Calu3 (cell line): ENCODE measurements at regions of chr5 and their contacts with region 1.

Region 1: DNA sequence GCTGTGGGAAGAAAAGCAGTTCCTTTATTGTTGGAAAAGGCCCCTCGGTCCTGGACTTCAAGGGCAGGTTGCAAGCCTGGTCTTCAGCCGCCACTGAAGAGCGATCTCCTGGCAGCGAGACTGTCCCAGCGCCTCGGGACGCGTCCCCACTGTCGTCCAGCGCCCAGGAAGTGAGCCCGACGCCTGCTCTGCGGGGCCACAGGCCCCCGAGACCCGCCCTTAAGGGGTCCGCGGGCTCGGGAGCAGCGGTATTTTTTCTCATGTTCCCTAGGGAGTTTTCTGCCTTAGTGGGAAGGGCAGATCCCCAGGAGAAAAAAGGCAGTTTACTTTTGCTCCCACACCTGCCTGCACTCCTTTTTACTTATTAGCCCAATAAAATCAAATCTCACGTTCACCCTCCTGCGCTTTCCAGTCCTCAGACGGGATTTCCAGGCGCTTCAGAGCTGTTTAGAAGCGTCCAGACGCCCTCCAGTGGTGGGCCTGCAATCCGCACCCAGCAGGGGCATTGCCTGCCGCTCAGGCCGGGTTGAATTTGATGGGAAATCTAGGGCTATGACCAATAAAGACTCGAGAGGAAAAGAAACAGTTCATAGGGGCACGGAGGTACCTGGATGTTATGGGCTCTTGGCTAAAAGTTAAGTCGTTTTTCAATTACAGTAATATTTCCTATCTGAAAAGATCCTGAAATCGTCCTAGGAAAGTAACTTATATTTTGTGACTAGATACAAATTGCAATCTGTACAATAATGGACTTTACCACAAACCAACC is 2.8 kb upstream of the EFNA5 start:
- DNase-seq: peak; percentile 97
- H3K4me3 Mint-ChIP-seq: peak overlapping the region; percentile 94
- H3K27ac Mint-ChIP-seq: peak overlapping the region; percentile 89
- H3K4me1 Mint-ChIP-seq: peaks cover 18% of the 10 kb centered on the region
- H3K27me3 Mint-ChIP-seq: no peaks in the 10 kb centered on the region
- CTCF ChIP-seq: peak; percentile 95

Region 2: GRCh38 chr5:106875591-106876297 is 797.8 kb before region 1 on chr5:
- CTCF ChIA-PET with region 1: interaction called, 5 read pairs
- intact Hi-C with region 1: loop called (anchors 10 kb)
- DNase-seq: peak; percentile 57
- H3K4me3 Mint-ChIP-seq: no peak overlapping the region
- H3K27ac Mint-ChIP-seq: no peak overlapping the region
- H3K4me1 Mint-ChIP-seq: peaks cover 27% of the 10 kb centered on the region
- H3K27me3 Mint-ChIP-seq: no peaks in the 10 kb centered on the region
- CTCF ChIP-seq: peak; percentile 50

Region 3: DNA sequence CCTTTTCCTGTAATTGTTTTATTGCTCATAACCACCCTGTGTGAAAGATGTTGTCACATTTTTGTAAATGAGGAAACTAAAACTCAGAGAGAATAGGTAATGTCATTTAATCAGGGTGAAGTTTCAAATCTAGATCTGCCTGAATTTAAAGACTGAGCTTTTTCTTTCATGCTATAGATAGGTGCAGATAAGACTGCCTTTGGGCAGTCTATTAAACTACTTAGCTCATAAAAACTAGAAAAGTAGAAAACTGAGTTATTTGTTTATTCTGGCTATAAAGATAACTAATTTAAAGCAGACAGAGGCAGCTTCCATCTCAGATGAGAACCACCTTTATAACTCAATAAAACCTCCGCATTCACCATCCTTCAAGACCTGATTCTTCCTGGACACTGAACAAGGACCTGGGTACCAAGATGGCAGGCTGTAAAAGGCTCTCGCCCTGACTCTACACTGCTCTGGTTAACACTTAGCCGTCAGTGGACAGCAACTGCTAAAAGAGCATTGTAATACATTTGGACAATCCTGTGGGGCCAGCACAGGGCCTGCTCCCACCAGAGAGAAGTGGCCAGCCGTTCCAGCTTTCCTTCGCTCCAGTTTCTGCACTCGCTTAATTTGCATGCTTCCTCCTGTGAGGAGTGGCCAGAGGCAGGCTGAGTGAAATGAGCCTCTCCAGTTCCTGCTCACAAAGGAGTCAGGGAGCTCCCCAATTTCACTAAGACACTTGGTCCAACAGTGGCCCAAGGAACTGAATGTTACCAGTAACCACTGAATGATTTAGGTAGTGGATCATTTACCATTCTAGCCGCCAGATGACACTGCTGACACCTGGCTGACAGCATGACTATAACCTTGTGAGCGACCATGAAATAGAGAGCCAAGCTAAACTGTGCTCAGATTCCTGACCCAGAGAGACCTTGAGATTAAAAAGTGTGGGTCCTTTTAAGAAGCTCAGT is 569.2 kb before region 1 on chr5:
- CTCF ChIA-PET with region 1: no interaction called
- intact Hi-C with region 1: loop called (anchors 2 kb)
- DNase-seq: peak; percentile 53
- H3K4me3 Mint-ChIP-seq: no peak overlapping the region
- H3K27ac Mint-ChIP-seq: peak overlapping the region; percentile 25
- H3K4me1 Mint-ChIP-seq: peaks cover 29% of the 10 kb centered on the region
- H3K27me3 Mint-ChIP-seq: no peaks in the 10 kb centered on the region
- CTCF ChIP-seq: peak; percentile 40

Region 4: DNA sequence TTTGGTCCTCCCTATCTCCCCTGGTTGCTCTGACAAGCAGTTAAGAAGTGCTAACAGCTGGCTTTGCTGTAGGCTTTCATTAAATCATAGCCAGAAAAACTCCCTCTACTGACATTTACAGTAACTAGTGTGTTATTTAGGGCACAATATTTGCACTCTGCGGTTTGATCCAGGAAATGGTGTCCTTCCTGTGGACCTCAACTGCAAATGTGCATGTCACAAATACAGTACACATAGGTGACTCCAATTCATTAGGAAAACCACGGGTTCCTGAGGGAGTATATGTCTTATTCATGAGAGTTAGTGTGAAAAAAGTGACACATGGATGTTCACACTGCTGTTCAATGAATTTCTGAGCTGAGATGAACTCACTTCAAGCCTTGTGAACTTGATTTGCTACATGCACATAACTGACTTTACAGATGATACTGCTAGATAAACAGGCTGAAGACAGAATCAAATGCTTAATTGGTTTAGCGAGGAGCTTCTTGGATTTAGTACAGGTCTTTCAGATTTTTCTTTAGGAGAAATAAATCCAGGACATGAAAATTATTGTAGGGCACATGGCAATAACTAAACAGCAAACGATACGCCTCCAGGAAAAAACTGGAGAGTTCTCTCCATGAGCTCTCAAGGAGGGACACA is 284.3 kb before region 1 on chr5:
- CTCF ChIA-PET with region 1: no interaction called
- intact Hi-C with region 1: loop called (anchors 2 kb)
- DNase-seq: peak; percentile 67
- H3K4me3 Mint-ChIP-seq: peak overlapping the region; percentile 61
- H3K27ac Mint-ChIP-seq: peak overlapping the region; percentile 97
- H3K4me1 Mint-ChIP-seq: peaks cover 64% of the 10 kb centered on the region
- H3K27me3 Mint-ChIP-seq: no peaks in the 10 kb centered on the region
- CTCF ChIP-seq: no peak

Region 5: GRCh38 chr5:107469485-107470294 is 203.9 kb before region 1 on chr5:
- CTCF ChIA-PET with region 1: interaction called, 5 read pairs
- intact Hi-C with region 1: loop called (anchors 2 kb)
- DNase-seq: peak; percentile 66
- H3K4me3 Mint-ChIP-seq: peak overlapping the region; percentile 45
- H3K27ac Mint-ChIP-seq: peak overlapping the region; percentile 96
- H3K4me1 Mint-ChIP-seq: peaks cover 95% of the 10 kb centered on the region
- H3K27me3 Mint-ChIP-seq: no peaks in the 10 kb centered on the region
- CTCF ChIP-seq: no peak

Region 6: DNA sequence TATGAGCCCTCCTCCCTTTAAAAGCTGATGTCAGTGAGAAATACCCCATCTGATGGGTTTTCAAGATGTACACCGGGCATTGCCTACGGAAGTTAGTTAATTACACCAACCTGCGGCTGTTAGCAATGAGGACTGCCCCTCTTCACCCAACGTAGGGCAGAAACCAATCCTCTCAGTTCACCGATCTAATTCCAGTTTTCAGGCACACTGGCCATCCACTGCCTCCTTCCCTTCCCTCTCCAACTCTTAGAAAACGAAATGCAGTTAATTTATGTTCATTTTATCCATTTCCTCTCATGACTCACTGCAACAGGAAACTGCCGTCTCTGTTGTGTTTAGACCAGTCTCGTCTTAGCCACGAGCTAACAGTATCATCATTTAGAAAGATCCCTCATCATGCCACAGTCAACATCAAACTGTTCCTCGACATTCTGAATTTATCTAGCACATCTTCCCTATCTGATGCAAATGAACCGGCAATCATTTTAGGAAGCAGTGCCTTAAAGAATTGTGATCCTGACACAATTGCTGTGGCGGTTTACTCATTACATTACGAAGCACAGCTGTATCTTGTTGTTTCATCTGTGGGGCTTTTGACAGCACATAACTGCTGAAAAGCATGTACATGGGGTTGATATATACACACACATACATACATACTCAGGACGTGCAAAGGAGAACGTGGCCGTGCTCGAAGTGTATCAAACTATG is 171.4 kb before region 1 on chr5:
- CTCF ChIA-PET with region 1: no interaction called
- intact Hi-C with region 1: no loop called
- DNase-seq: no peak
- H3K4me3 Mint-ChIP-seq: no peak overlapping the region
- H3K27ac Mint-ChIP-seq: peak overlapping the region; percentile 83
- H3K4me1 Mint-ChIP-seq: peaks cover 67% of the 10 kb centered on the region
- H3K27me3 Mint-ChIP-seq: no peaks in the 10 kb centered on the region
- CTCF ChIP-seq: no peak

Region 7: GRCh38 chr5:107820429-107820828 is 146.9 kb after region 1 on chr5:
- CTCF ChIA-PET with region 1: no interaction called
- intact Hi-C with region 1: no loop called
- DNase-seq: no peak
- H3K4me3 Mint-ChIP-seq: no peak overlapping the region
- H3K27ac Mint-ChIP-seq: no peak overlapping the region
- H3K4me1 Mint-ChIP-seq: no peaks in the 10 kb centered on the region
- H3K27me3 Mint-ChIP-seq: no peaks in the 10 kb centered on the region
- CTCF ChIP-seq: no peak